Gastrocnemius medialis (tissue), 4 donors: ENCODE measurements at regions of chr2 and their contacts with region 1.

Region 1: DNA sequence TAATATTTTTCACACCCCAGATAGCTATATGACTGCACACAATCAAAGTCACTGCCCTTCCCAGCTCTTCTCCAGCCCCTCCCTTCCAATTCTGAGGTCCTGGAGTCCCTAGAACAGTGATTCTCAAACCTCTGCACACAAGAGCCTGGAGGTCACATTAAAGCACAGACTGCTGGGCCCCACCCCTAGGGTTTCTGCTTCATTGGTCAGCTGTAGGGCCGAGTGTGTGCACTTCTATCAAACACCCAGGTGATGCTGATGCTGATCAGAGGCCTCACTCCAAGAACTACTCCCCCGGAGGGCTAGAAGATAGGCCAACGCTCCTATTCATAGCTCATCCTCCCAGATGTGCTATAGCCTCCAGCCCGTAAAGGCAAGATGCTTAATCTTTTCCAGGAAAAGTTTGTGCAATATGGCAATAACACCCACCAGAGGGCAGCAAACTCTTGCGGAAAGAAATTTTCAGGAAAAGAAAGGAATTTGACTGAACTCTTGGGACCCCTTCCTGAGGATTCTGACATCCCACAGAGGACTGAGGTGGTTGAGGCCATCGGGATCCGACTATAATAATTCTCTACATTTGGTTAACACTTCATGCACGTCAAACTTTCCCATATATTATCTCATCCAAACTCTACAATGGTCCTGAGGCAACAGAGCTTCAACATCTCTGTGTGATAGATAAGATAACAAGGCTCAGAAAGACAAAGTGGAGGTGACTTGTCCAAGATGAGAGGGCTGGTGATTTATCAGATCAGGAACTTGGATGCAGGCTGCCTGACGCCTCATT is 194.2 kb upstream of the PKDCC start:
- DNase-seq: no peak
- ATAC-seq: no peak
- H3K4me3 ChIP-seq: no peak overlapping the region
- H3K27ac ChIP-seq: peak overlapping the region; percentile 83 to 93 (median 90)
- H3K4me1 ChIP-seq: peaks cover 12 to 19% of the 10 kb centered on the region in 2 donors
- H3K27me3 ChIP-seq: no peaks in the 10 kb centered on the region
- CTCF ChIP-seq: peak; percentile 59 to 79 (median 68)
- POLR2A ChIP-seq: no peak

Region 2: GRCh38 chr2:42053791-42054701 is 200.4 kb after region 1 on chr2:
- in situ Hi-C with region 1: no loop called
- intact Hi-C with region 1: loop called (anchors 1 kb)
- DNase-seq: peak; percentile 81 to 94
- ATAC-seq: peak; percentile 74 to 80
- H3K4me3 ChIP-seq: peak overlapping the region; percentile 24 to 86 (median 52)
- H3K27ac ChIP-seq: peak overlapping the region; percentile 94 to 99 (median 98)
- H3K4me1 ChIP-seq: peaks cover 69 to 72% of the 10 kb centered on the region in 2 donors
- H3K27me3 ChIP-seq: no peaks in the 10 kb centered on the region
- CTCF ChIP-seq: no peak
- POLR2A ChIP-seq: peak; percentile 79 to 87

Region 3: DNA sequence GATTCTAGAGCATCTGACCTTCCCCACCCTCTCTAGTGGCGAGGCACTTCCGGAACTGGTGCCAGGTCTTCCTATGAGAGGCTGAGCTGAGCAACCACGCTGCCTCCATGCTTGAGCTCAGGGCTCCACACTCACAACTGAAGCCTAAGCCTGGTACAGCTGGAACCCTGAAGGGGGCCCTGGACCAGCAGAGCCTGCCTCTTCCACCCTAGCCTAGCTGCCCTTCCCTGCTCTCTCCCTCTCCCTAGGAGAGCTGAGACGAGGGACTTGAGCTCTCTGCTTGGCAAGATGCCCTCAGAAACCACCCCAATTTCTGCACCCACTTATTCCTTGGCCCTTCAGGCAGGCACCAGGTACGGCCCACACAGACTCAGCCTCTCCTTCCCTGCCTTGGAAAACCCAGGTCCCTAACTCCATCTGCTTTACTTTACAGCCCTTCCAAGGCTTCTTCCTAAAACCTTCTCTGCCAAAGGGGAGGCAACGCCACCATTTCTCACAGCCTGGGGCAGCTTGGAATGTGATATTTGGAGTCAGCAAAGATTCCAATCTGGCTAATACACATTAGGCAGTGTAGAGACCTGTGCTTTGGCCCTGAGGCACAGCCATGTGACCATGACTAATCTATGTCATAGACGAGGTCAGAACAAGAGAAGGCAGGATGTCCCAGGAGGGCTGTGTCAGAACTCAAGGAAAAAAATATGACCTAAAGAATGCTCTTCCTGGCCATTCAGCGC is 488.6 kb after region 1 on chr2:
- in situ Hi-C with region 1: no loop called
- intact Hi-C with region 1: no loop called
- DNase-seq: peak; percentile 63
- ATAC-seq: peak; percentile 96 to 97
- H3K4me3 ChIP-seq: no peak overlapping the region
- H3K27ac ChIP-seq: peak overlapping the region; percentile 57 to 75 (median 68)
- H3K4me1 ChIP-seq: peaks cover 13 to 19% of the 10 kb centered on the region in 2 donors
- H3K27me3 ChIP-seq: no peaks in the 10 kb centered on the region
- CTCF ChIP-seq: no peak
- POLR2A ChIP-seq: no peak